MCF 10A (cell line): ENCODE measurements at regions of chr14 and their contacts with region 1.

Region 1: GRCh38 chr14:94143239-94143638 is 13.8 kb upstream of the IFI27L2 start:
- DNase-seq: no peak
- H3K4me3 Mint-ChIP-seq: no peak overlapping the region
- H3K27ac Mint-ChIP-seq: no peak overlapping the region
- H3K4me1 Mint-ChIP-seq: peaks cover 12% of the 10 kb centered on the region
- H3K27me3 Mint-ChIP-seq: peaks cover 2% of the 10 kb centered on the region
- CTCF ChIP-seq: peak; percentile 21

Region 2: GRCh38 chr14:94001501-94002396 is 141.5 kb before region 1 on chr14:
- CTCF ChIA-PET with region 1: no interaction called
- POLR2A ChIA-PET with region 1: no interaction called
- intact Hi-C with region 1: no loop called
- DNase-seq: peak; percentile 63
- H3K4me3 Mint-ChIP-seq: no peak overlapping the region
- H3K27ac Mint-ChIP-seq: no peak overlapping the region
- H3K4me1 Mint-ChIP-seq: peaks cover 5% of the 10 kb centered on the region
- H3K27me3 Mint-ChIP-seq: peaks cover 12% of the 10 kb centered on the region
- CTCF ChIP-seq: peak; percentile 88

Region 3: DNA sequence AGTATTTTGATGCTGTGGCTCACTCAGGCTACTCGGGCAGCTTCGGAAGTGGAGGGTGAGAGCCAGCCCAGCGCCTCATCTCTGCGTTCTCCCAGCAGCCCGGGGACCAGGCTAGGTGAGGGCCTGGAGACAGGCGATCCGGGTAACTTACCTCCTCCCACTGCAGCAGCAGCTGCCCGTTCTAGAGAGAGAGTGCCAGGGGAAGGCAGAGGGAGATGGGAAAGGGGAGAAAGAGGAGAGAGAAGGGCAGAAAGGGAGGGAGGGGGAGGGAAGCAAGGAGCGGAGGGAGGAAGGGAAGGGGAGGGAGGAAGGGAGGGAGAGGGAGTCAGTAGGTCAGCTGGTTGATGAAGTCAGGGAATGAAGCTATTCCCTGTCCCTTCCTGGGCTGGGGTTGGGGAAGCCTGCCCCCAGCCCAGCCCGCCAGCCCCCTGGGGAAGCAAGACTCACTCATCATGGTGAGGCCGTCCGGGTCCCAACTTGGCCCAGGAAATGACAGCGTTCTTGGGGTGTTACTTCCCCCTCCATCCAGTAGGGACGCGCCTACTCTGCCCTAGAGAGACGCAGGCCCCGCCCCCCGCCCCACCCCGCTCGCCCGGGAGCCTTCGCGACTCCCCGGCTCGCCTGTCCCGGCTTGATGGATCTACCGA is 14.0 kb before region 1 on chr14 and contains the start of gene IFI27L2:
- CTCF ChIA-PET with region 1: interaction called, 18 read pairs
- POLR2A ChIA-PET with region 1: no interaction called
- intact Hi-C with region 1: no loop called
- DNase-seq: peak; percentile 86
- H3K4me3 Mint-ChIP-seq: peak within 1 kb of the TSS; percentile 80
- H3K27ac Mint-ChIP-seq: peak within 1 kb of the TSS; percentile 43
- H3K4me1 Mint-ChIP-seq: peaks cover 9% of the 10 kb centered on the region
- H3K27me3 Mint-ChIP-seq: no peaks in the 10 kb centered on the region
- CTCF ChIP-seq: peak; percentile 26
- total RNA-seq, gene IFI27L2: 44.3 and 59.3 TPM in 2 replicates

Region 4: GRCh38 chr14:94501588-94502516 is 358.6 kb after region 1 on chr14:
- CTCF ChIA-PET with region 1: no interaction called
- POLR2A ChIA-PET with region 1: no interaction called
- intact Hi-C with region 1: no loop called
- DNase-seq: no peak
- H3K4me3 Mint-ChIP-seq: no peak overlapping the region
- H3K27ac Mint-ChIP-seq: no peak overlapping the region
- H3K4me1 Mint-ChIP-seq: no peaks in the 10 kb centered on the region
- H3K27me3 Mint-ChIP-seq: no peaks in the 10 kb centered on the region
- CTCF ChIP-seq: no peak